Activated CD4-positive, alpha-beta memory T cell treated with anti-CD3 and anti-CD28 coated beads, Interleukin-2, amount 10 ng/mL, durations not matched to agents 7 days and 5 days (primary cell): ENCODE measurements at regions of chr22 and their contacts with region 1.

Region 1: GRCh38 chr22:42895087-42895486 is 38.0 kb upstream of the ARFGAP3 start:
- DNase-seq: peak; percentile 43
- H3K4me3 Mint-ChIP-seq: no peak overlapping the region
- H3K27ac Mint-ChIP-seq: peak overlapping the region; percentile 90
- H3K4me1 Mint-ChIP-seq: peaks cover 59% of the 10 kb centered on the region
- H3K27me3 Mint-ChIP-seq: no peaks in the 10 kb centered on the region

Region 2: GRCh38 chr22:42868751-42869251 is 26.3 kb before region 1 on chr22:
- CTCF ChIA-PET with region 1: interaction called, 10 read pairs
- POLR2A ChIA-PET with region 1: interaction called, 3 read pairs
- DNase-seq: no peak
- H3K4me3 Mint-ChIP-seq: no peak overlapping the region
- H3K27ac Mint-ChIP-seq: no peak overlapping the region
- H3K4me1 Mint-ChIP-seq: peaks cover 3% of the 10 kb centered on the region
- H3K27me3 Mint-ChIP-seq: no peaks in the 10 kb centered on the region

Region 3: DNA sequence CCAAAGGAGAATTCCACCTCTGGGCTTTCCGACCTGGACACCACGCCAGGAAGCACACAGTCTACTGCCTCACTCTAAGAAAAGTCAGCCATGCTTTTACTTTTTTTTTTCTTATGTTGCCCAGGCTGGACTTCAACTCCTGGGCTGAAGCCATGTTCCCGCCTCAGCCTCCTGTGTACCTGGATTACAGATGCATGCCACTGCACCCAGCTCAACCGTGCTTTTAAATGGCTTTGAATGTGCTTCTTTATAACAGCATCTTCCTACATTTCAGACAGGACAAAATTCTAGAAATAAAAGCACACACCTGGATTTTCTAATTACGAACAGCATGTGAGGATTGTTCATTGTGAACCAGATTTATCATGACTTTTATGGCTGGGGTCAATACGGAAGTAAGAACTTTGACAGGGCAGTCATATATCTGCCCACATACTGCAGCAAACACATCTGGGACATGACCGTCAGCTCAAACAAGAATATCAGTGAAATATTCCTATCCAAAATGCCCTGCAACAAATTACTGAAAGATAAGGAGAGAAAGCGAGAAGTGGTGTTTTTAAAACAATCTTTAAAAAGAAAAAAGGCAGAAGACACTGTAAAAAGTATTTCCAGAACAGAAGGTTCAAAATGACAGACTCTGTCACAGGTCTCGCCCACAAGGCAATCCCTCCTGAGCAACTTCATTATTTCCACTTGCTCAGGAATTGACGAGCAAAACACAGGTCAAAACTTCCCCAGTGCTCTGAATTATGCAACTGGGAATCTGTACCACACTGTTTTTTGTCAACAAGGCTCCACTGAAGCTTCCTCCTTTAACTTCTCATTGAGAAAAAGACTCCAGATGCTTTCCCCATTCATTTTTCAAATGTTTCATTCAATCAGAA is 77.8 kb after region 1 on chr22:
- CTCF ChIA-PET with region 1: no interaction called
- POLR2A ChIA-PET with region 1: no interaction called
- DNase-seq: no peak
- H3K4me3 Mint-ChIP-seq: no peak overlapping the region
- H3K27ac Mint-ChIP-seq: no peak overlapping the region
- H3K4me1 Mint-ChIP-seq: peaks cover 3% of the 10 kb centered on the region
- H3K27me3 Mint-ChIP-seq: no peaks in the 10 kb centered on the region

Region 4: DNA sequence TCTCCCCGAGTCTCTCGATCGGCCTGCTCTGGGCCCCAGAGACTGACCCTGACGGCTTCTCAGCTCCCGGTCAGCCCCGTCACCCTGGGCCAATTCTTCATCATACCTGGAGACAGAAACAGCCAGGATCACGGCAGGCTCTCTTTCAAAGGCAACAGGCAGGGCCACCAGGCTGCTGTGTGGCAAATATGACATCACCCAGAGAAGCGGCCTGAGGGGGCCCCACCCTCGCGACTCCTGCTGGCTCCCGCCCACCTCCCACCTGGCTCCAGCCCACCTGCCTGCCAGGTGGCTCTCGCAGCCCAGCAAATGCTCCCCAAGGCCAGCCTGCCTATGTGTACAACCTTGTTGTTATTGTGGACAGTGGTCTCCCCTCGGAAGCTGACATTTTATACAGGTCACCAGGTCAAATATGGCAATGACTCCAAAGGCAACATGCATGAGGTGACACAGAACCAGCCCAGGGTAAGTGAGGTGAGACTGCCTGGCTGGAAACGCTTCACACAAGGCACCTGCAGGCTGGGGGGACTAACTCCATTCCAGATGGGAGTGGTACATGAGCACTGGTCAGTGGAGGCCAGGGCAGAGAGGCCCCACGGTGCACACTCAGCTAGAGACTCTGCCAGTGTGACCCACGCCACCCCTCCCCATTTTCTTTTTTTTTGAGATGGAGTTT is 144.9 kb after region 1 on chr22:
- CTCF ChIA-PET with region 1: no interaction called
- POLR2A ChIA-PET with region 1: no interaction called
- DNase-seq: no peak
- H3K4me3 Mint-ChIP-seq: no peak overlapping the region
- H3K27ac Mint-ChIP-seq: no peak overlapping the region
- H3K4me1 Mint-ChIP-seq: no peaks in the 10 kb centered on the region
- H3K27me3 Mint-ChIP-seq: no peaks in the 10 kb centered on the region